ENCODE measurements at regions of chr7 and their contacts with region 1.

Region 1: GRCh38 chr7:36152756-36153570 is at the start of gene EEPD1:
- DNase-seq: peak; percentile 100
- H3K4me3 ChIP-seq: peak within 1 kb of the TSS; percentile 65 to 84
- H3K27ac ChIP-seq: peak within 1 kb of the TSS; percentile 84 to 87
- H3K4me1 ChIP-seq: peaks cover 4 to 47% (median 40%) of the 10 kb centered on the region in 4 donors
- H3K27me3 ChIP-seq: no peaks in the 10 kb centered on the region
- CTCF ChIP-seq: no peak

Region 2: GRCh38 chr7:35995334-35995733 is 157.6 kb before region 1 on chr7:
- intact Hi-C with region 1: no loop called
- DNase-seq: no peak
- H3K4me3 ChIP-seq: no peak overlapping the region
- H3K27ac ChIP-seq: no peak overlapping the region
- H3K4me1 ChIP-seq: no peaks in the 10 kb centered on the region
- H3K27me3 ChIP-seq: no peaks in the 10 kb centered on the region
- CTCF ChIP-seq: no peak

Region 3: GRCh38 chr7:36034020-36034419 is 118.9 kb before region 1 on chr7:
- intact Hi-C with region 1: loop called (anchors 2 kb)
- DNase-seq: no peak
- H3K4me3 ChIP-seq: no peak overlapping the region
- H3K27ac ChIP-seq: no peak overlapping the region
- H3K4me1 ChIP-seq: peaks cover 0 to 39% (median 28%) of the 10 kb centered on the region in 4 donors
- H3K27me3 ChIP-seq: peaks cover 0 to 2% of the 10 kb centered on the region in 2 donors
- CTCF ChIP-seq: no peak

Region 4: GRCh38 chr7:36227223-36227622 is 74.3 kb after region 1 on chr7:
- intact Hi-C with region 1: no loop called
- DNase-seq: peak; percentile 72 to 79
- H3K4me3 ChIP-seq: no peak overlapping the region
- H3K27ac ChIP-seq: peak overlapping the region; percentile 46 to 49
- H3K4me1 ChIP-seq: peaks cover 0 to 22% (median 18%) of the 10 kb centered on the region in 4 donors
- H3K27me3 ChIP-seq: no peaks in the 10 kb centered on the region
- CTCF ChIP-seq: no peak

Region 5: DNA sequence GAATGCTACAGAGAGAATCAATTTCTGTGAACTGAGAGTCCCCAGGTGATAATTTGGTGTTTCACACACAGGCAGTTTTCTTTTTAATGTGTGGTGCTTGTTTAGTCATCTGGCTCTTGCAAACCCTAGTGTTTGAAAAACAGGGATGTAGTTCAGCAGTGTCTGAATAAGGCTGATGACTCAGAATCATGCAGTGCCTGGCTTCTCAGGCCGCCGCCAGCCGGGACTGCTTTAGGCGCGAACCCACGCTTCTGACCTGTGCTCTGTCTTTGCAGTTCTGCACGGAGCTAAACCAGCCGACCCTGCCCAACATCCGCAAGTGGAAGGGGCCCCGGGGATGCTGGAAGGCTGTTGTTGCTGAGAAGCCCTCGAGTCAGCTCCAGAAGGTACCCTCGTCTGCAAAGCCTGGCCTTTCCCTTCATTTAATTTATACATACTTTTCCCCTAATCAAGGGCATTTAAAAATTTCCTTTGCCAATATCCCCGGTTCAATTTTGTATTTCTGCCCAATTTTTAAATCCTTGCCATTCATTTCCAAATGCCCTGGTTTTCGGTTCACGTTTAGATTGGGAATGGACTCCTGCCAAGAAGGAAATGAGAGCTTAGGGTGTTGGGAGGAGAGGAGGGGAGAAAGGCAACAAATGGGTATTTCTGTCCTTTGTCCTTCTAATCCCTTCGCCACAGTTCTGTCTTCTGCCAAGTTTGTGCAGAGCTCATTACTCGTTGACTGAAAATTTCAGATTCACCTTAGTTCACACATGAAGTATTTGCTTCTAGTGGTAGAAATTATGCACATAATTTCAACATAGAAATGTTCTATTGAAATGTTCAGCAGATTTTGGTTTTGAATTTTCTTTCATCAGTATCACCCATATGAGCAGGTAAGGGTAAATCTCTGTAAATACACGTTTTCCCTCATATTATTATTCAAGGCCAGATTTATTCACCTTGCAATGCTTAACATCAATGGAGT is 128.2 kb after region 1 on chr7:
- intact Hi-C with region 1: loop called (anchors 10 kb)
- DNase-seq: peak; percentile 85 to 86
- H3K4me3 ChIP-seq: peak overlapping the region; percentile 14 to 33
- H3K27ac ChIP-seq: peak overlapping the region; percentile 67 to 71
- H3K4me1 ChIP-seq: peaks cover 0 to 53% (median 36%) of the 10 kb centered on the region in 4 donors
- H3K27me3 ChIP-seq: no peaks in the 10 kb centered on the region
- CTCF ChIP-seq: peak in 1 of 2 experiments; percentile 35

Region 6: GRCh38 chr7:36396150-36396549 is 243.2 kb after region 1 on chr7:
- intact Hi-C with region 1: no loop called
- DNase-seq: no peak
- H3K4me3 ChIP-seq: no peak overlapping the region
- H3K27ac ChIP-seq: no peak overlapping the region
- H3K4me1 ChIP-seq: peaks cover 0 to 18% (median 3%) of the 10 kb centered on the region in 4 donors
- H3K27me3 ChIP-seq: no peaks in the 10 kb centered on the region
- CTCF ChIP-seq: no peak

Region 7: DNA sequence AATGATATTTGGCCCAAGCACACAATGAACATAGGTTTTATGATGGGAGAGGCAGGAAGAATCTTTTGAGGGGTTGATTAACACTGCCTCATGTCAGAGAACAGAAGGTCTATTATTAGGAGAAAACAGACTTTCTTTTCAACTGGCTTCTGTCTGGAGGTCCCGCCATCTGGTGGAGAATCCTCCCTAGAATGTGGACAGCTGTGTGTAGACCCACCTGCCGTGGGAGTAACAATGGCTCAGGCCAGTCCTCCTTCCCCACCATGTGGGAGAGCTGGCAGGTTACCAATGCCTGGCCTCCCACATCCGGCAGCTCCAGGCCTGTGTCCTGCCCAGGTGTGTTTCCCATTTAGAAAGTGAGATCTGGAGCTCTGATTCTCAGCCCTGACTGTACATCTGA is 641.7 kb after region 1 on chr7:
- intact Hi-C with region 1: no loop called
- DNase-seq: no peak
- H3K4me3 ChIP-seq: no peak overlapping the region
- H3K27ac ChIP-seq: no peak overlapping the region
- H3K4me1 ChIP-seq: peaks cover 0 to 2% (median 0%) of the 10 kb centered on the region in 4 donors
- H3K27me3 ChIP-seq: no peaks in the 10 kb centered on the region
- CTCF ChIP-seq: no peak